Panc1 (cell line): ENCODE measurements at regions of chr17 and their contacts with region 1.

Region 1: GRCh38 chr17:4789901-4790704 is 1.3 kb downstream of the GLTPD2 start:
- DNase-seq: peak; percentile 78
- ATAC-seq: peak; percentile 95
- H3K4me3 ChIP-seq: peak overlapping the region; percentile 59 to 67
- H3K27ac ChIP-seq: peak overlapping the region; percentile 23
- H3K4me1 ChIP-seq: peaks cover 6% of the 10 kb centered on the region
- H3K27me3 ChIP-seq: no peaks in the 10 kb centered on the region
- CTCF ChIP-seq: peak; percentile 91

Region 2: DNA sequence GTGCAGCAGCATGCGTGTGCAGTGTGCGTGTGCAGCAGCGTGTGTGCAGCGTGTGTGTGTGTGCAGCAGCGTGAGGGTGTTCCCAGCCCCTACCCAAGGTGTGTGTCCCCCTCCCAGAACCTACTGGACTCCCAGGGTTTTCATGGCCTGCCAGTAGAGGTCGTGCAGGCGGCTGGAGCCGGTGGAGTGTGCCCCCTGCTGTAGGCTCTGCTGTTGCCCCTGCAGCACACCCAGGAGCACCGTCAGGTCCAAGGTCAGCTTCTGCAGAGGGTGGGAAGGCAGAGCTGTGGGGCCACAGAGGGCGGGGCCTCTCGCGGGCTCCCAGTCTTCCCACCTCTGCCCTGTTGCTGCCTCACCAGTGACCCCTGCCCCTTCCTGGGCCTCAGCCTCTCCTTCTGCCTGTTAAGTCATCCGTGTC is 249.9 kb before region 1 on chr17:
- CTCF ChIA-PET with region 1: no interaction called
- POLR2A ChIA-PET with region 1: no interaction called
- in situ Hi-C with region 1: no loop called
- intact Hi-C with region 1: no loop called
- DNase-seq: no peak
- ATAC-seq: no peak
- H3K4me3 ChIP-seq: no peak overlapping the region
- H3K27ac ChIP-seq: no peak overlapping the region
- H3K4me1 ChIP-seq: peaks cover 23% of the 10 kb centered on the region
- H3K27me3 ChIP-seq: no peaks in the 10 kb centered on the region
- CTCF ChIP-seq: peak; percentile 71; the same call in 1 of the 2 replicates

Region 3: GRCh38 chr17:4709794-4710692 is 80.1 kb before region 1 on chr17 and contains the start of gene ARRB2:
- CTCF ChIA-PET with region 1: interaction called, 17 read pairs
- POLR2A ChIA-PET with region 1: no interaction called
- in situ Hi-C with region 1: no loop called
- intact Hi-C with region 1: no loop called
- DNase-seq: peak; percentile 91
- ATAC-seq: peak; percentile 95
- H3K4me3 ChIP-seq: peak within 1 kb of the TSS; percentile 56 to 60
- H3K27ac ChIP-seq: peak within 1 kb of the TSS; percentile 71
- H3K4me1 ChIP-seq: peaks cover 4% of the 10 kb centered on the region
- H3K27me3 ChIP-seq: no peaks in the 10 kb centered on the region
- CTCF ChIP-seq: peak; percentile 78; the same call in 1 of the 2 replicates
- total RNA-seq, gene ARRB2: 39.2 TPM

Region 4: GRCh38 chr17:4823373-4824089 is 33.4 kb after region 1 on chr17:
- CTCF ChIA-PET with region 1: interaction called, 11 read pairs
- POLR2A ChIA-PET with region 1: interaction called, 5 read pairs
- in situ Hi-C with region 1: no loop called
- intact Hi-C with region 1: no loop called
- DNase-seq: no peak
- ATAC-seq: peak; percentile 42; the same call in 1 of the 2 replicates
- H3K4me3 ChIP-seq: no peak overlapping the region
- H3K27ac ChIP-seq: no peak overlapping the region
- H3K4me1 ChIP-seq: no peaks in the 10 kb centered on the region
- H3K27me3 ChIP-seq: no peaks in the 10 kb centered on the region
- CTCF ChIP-seq: no peak

Region 5: DNA sequence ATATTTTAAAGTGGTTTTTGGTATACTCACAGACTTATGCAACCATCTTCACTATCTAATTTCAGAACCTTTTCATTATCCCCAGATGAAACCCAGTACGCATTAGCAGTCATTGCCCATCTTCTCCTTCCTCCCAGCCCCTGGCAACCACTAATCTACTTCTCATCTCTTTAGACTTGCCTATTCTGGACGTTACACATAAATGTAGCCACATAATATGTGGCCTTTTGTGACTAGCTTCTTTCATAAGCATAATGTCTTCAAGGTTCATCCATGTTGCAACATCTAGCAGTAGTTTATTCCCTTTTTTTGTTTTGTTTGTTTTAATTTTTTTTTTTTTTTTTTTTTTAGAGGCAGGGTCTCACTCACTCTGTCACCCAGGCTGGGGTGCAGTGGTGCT is 80.8 kb after region 1 on chr17:
- CTCF ChIA-PET with region 1: no interaction called
- POLR2A ChIA-PET with region 1: interaction called, 12 read pairs
- in situ Hi-C with region 1: no loop called
- intact Hi-C with region 1: no loop called
- DNase-seq: no peak
- ATAC-seq: no peak
- H3K4me3 ChIP-seq: no peak overlapping the region
- H3K27ac ChIP-seq: no peak overlapping the region
- H3K4me1 ChIP-seq: no peaks in the 10 kb centered on the region
- H3K27me3 ChIP-seq: no peaks in the 10 kb centered on the region
- CTCF ChIP-seq: no peak

Region 6: DNA sequence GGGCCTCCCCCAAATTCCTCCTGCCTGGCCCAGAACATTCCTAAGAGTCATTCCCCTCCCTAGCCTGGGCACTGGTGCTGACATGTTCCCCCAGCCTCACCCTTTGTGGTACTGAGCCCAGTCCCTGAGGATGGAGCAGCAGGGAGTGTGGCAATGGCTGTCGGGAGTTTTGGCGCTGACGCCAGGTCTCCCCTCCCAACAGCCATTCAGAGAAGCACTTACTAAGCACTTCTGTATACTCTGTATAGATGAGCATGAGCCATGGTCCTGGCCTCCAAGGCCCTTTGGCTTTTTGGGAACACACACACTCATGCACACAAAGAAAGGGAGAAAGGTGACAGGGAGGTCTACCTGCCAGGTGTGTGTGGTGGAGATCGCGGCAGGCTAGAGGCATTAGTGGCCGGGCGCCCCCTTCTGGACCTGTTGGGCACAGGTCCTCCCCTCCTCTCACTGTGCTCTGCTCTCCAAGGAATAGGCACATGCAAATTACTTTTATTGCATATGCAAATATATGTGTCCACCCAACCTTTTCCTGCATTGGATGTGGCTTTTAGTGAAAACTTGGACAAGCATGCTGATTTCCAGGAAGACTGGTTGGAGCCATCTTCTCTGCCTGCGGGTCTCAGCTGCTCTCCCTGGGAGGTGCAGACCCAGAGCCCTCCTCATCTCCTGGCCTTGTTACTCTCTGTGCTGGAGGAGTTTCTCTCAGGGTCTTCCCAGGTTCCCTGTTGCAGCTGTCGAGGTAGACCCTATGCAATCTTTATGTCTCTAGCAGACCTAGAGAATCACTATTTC is 91.9 kb after region 1 on chr17:
- CTCF ChIA-PET with region 1: no interaction called
- POLR2A ChIA-PET with region 1: interaction called, 6 read pairs
- in situ Hi-C with region 1: no loop called
- intact Hi-C with region 1: loop called (anchors 5 kb)
- DNase-seq: peak; percentile 42
- ATAC-seq: peak; percentile 86
- H3K4me3 ChIP-seq: no peak overlapping the region
- H3K27ac ChIP-seq: no peak overlapping the region
- H3K4me1 ChIP-seq: no peaks in the 10 kb centered on the region
- H3K27me3 ChIP-seq: no peaks in the 10 kb centered on the region
- CTCF ChIP-seq: peak; percentile 95